Heart right ventricle (tissue), 16 donors: ENCODE measurements at regions of chr3 and their contacts with region 1.

Region 1: GRCh38 chr3:195909644-195910508 is 1.5 kb upstream of the TNK2 start:
- DNase-seq: peak; percentile 84 to 89
- ATAC-seq: peak; percentile 80 to 92 (median 88)
- H3K4me3 ChIP-seq: peak overlapping the region in 9 of 10 donors; percentile 58 to 89 (median 66)
- H3K27ac ChIP-seq: peak overlapping the region in 9 of 10 donors; percentile 26 to 75 (median 64)
- H3K4me1 ChIP-seq: peaks cover 12 to 52% (median 31%) of the 10 kb centered on the region in 9 donors
- H3K27me3 ChIP-seq: no peaks in the 10 kb centered on the region
- CTCF ChIP-seq: no peak

Region 2: DNA sequence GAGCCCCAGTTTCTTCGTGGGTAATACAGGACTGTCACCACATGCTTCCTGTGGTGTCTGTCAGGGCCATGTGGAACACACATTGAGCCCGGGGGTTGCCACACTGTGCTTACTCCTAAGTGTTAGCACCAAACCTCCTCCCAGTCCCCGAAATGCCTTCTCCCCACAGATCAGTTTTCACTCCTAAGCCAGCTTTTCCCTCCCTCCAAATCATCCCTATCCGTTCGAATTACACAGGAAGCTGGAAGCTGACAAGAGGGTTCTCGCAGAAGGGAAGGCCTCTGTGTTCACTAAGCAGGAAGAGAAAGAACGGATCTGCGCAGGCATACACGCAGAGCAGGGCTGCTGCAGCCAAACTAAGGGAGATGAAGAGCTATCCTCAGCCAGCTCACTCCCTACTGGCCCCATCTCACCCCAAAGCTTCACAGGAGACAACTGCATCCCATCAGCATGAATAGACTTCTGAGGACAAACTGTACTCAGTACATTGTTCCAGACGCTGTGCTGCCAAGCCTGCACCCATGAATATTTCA is 671.2 kb before region 1 on chr3:
- intact Hi-C with region 1: no loop called
- DNase-seq: peak in 1 of 2 donors; percentile 24
- ATAC-seq: peak; percentile 11 to 90 (median 78)
- H3K4me3 ChIP-seq: no peak overlapping the region
- H3K27ac ChIP-seq: peak overlapping the region in 6 of 10 donors; percentile 13 to 64 (median 42)
- H3K4me1 ChIP-seq: peaks cover 0 to 31% (median 20%) of the 10 kb centered on the region in 9 donors
- H3K27me3 ChIP-seq: no peaks in the 10 kb centered on the region
- CTCF ChIP-seq: no peak

Region 3: DNA sequence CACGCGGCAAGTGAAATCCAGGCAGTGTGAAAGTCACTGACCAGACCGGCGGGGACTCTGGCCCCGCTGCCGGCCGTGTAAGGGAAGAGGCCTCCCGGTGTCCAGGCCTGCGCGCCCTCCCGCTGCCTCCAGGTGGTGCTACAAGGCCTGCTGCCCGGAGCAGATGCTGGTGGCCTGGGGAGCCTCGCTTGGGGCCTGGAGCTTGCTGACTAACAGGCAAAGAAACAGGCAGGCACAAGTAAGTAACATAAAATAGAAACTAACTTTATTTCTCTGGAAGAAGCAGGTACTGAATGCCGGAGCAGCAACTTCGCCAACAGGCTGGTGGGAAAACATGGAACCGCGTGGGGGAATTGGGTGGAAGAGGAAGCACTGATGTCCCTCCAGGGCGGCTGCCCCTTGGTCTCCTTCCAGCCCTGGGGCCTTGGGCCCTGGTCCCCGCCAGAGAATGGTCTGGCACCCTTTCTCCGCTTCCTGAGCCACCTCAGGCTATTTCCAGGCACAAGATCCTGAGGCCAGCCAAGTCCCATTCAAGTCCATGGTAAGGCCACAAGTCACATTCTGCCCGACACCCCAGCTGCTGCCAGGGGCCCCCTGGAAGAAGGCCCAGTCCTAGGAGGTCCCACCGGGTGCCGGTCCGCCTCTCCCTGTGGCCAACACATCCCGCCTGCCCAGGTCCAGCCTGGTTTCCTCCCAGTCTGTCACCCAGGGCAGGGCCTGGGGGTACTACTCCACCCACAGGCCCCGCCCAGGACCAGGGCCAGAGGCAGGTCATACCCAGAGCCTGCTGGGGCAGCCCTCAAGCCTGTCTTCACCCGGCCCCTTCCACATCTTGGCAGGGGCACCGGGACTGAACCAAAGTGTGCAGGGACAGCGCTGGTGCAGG is 46.5 kb before region 1 on chr3:
- intact Hi-C with region 1: loop called in 9 of 10 experiments (anchors 1 to 5 kb)
- DNase-seq: peak; percentile 88 to 91
- ATAC-seq: peak; percentile 93 to 99 (median 97)
- H3K4me3 ChIP-seq: no peak overlapping the region
- H3K27ac ChIP-seq: peak overlapping the region in 9 of 10 donors; percentile 21 to 80 (median 60)
- H3K4me1 ChIP-seq: peaks cover 0 to 31% (median 15%) of the 10 kb centered on the region in 9 donors
- H3K27me3 ChIP-seq: no peaks in the 10 kb centered on the region
- CTCF ChIP-seq: peak; percentile 91 to 99 (median 97)

Region 4: DNA sequence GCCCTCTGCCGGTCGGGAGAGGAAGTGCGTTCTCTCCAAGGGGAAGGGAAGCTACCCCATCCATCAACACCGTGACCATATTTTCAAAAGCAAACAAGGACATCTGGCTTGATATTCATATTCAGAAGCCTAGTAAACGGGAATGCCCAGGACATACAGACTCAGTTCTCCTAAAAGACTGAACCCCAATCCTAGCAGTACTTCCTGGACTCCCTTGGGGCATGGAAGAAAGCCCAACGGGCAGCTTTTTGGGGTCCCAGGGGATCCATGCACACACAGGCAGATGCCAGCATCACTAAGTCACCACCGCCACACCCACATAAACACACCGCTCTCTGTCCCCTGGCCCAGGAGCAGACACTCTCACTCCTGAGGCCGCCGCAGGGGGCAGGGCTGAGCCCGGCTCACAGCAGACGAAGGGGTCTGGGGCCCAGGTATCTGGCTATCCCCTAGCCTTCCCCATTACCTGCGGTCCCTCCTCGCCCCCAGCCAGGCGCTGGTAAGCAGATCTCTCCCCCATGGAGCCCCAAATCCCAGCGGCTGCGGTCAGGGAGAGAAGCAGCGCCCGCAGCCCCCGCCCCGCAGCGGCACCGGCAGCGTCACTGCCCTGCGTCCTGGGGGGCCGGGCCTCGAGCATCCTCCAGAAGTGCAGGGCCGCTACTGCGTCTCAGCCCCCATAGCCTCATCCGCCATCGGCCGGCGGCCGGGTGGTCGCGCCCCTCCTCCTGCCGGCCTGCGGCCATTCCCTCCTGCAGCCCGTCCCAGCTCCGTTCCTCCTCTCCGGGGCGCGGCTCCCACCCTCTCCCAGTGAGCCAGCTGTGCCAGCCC is 14.9 kb before region 1 on chr3:
- intact Hi-C with region 1: loop called in 1 of 10 experiments (anchors 2 kb)
- DNase-seq: peak; percentile 41 to 57
- ATAC-seq: peak; percentile 8 to 40 (median 32)
- H3K4me3 ChIP-seq: peak overlapping the region; percentile 69 to 96 (median 80)
- H3K27ac ChIP-seq: peak overlapping the region; percentile 79 to 95 (median 92)
- H3K4me1 ChIP-seq: peaks cover 30 to 79% (median 59%) of the 10 kb centered on the region in 9 donors
- H3K27me3 ChIP-seq: no peaks in the 10 kb centered on the region
- CTCF ChIP-seq: peak; percentile 88 to 98 (median 92)

Region 5: GRCh38 chr3:196186651-196187573 is 277.0 kb after region 1 on chr3:
- intact Hi-C with region 1: no loop called
- DNase-seq: no peak
- ATAC-seq: peak in 6 of 8 donors; percentile 28 to 72 (median 56)
- H3K4me3 ChIP-seq: peak overlapping the region in 3 of 10 donors; percentile 1 to 15 (median 2)
- H3K27ac ChIP-seq: peak overlapping the region in 3 of 10 donors; percentile 33 to 74 (median 69)
- H3K4me1 ChIP-seq: peaks cover 0 to 23% (median 7%) of the 10 kb centered on the region in 9 donors
- H3K27me3 ChIP-seq: no peaks in the 10 kb centered on the region
- CTCF ChIP-seq: no peak